ENCODE measurements at regions of chr5 and their contacts with region 1.

Region 1: GRCh38 chr5:43040287-43041098 is at the start of gene ANXA2R:
- DNase-seq: peak; percentile 96
- H3K4me3 Mint-ChIP-seq: peak within 1 kb of the TSS; percentile 97
- H3K27ac Mint-ChIP-seq: peak within 1 kb of the TSS; percentile 99
- H3K4me1 Mint-ChIP-seq: peaks cover 42% of the 10 kb centered on the region
- H3K27me3 Mint-ChIP-seq: no peaks in the 10 kb centered on the region
- total RNA-seq, gene ANXA2R: 25.1 to 28.3 TPM

Region 2: DNA sequence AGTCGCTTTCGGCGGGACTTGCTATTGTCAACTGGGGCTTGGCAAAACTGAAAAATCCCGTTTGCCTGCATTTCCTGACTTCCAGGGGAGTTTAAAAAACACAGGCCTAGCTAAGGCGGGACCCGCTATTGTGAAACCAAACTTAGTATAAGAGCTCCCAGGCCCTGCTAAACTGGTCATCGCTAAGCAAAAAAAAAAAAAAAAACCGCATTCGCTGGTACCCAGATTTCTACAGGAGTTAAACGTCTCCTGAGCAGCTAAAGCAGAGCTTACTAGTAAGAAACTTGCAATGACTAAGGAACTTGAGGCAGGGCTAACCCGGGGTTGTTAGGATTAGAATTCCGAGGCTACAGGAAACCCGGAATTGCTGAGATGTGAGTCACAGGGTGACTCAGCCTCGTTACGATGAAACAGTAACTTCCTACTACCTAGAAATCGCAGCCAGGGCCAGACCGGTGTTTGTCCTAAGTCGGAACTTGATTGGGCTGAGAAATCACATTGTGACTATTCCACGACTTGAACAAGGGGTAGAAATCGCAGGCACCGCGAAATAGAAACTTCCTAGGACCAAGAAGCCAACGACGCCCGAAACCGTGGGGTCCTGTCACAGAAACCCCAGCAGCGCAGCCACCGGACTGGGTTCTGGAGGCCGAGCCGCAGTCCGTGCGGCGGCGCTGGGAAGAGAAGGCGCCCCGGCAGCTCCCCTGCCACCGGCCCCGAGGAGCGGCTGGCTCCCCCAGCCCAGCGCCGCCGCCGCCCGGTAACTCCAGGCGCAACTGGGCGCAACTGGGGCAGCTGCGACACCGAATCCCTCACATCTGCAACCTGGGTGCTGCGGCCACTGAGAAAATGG is 89.8 kb before region 1 on chr5:
- CTCF ChIA-PET with region 1: interaction called, 32 read pairs
- POLR2A ChIA-PET with region 1: interaction called, 310 read pairs
- DNase-seq: peak; percentile 77
- H3K4me3 Mint-ChIP-seq: peak overlapping the region; percentile 85
- H3K27ac Mint-ChIP-seq: peak overlapping the region; percentile 100
- H3K4me1 Mint-ChIP-seq: peaks cover 37% of the 10 kb centered on the region
- H3K27me3 Mint-ChIP-seq: no peaks in the 10 kb centered on the region

Region 3: GRCh38 chr5:42994246-42995151 is 46.0 kb before region 1 on chr5:
- CTCF ChIA-PET with region 1: interaction called, 100 read pairs
- POLR2A ChIA-PET with region 1: interaction called, 614 read pairs
- DNase-seq: peak; percentile 91
- H3K4me3 Mint-ChIP-seq: peak overlapping the region; percentile 99
- H3K27ac Mint-ChIP-seq: peak overlapping the region; percentile 100
- H3K4me1 Mint-ChIP-seq: peaks cover 25% of the 10 kb centered on the region
- H3K27me3 Mint-ChIP-seq: no peaks in the 10 kb centered on the region

Region 4: DNA sequence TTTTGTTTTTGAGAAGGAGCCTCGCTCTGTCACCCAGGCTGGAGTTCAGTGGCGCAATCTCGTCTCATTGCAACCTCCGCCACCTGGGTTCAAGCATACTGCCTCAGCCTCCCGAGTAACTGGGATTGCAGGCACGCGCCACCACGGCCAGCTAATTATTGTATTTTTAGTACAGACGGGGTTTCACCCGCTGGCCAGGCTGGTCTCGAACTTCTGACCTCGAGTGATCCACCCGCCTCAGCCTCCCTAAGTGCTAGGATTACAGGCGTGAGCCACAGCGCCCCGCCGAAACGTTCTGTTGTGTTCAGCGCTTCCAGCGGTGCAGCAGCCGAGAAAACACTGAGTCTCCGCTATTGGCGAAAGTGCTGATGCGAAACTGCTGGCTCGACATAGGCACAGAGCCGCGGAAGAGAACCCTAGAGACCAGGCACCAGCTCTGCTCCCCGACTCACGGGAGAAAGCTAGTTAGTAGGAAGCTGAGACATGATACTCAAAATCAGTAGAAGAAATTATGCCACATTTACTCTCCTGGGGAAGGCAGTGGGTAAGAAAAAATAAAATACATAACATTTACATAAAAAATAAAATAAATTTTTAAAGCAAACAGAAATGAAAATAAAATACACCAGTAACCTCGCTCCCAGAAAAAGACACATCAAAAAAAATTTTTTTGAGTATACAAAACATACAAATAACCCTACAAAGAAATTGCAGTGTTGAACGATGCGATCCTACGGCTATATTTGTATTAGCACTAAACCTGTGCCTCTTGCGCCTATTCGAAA is 31.9 kb before region 1 on chr5:
- CTCF ChIA-PET with region 1: interaction called, 55 read pairs
- POLR2A ChIA-PET with region 1: interaction called, 188 read pairs
- DNase-seq: peak; percentile 93
- H3K4me3 Mint-ChIP-seq: peak overlapping the region; percentile 89
- H3K27ac Mint-ChIP-seq: peak overlapping the region; percentile 97
- H3K4me1 Mint-ChIP-seq: peaks cover 39% of the 10 kb centered on the region
- H3K27me3 Mint-ChIP-seq: peaks cover 5% of the 10 kb centered on the region

Region 5: GRCh38 chr5:43019614-43020293 is 20.7 kb before region 1 on chr5:
- CTCF ChIA-PET with region 1: interaction called, 100 read pairs
- POLR2A ChIA-PET with region 1: interaction called, 753 read pairs
- DNase-seq: peak; percentile 90
- H3K4me3 Mint-ChIP-seq: peak overlapping the region; percentile 93
- H3K27ac Mint-ChIP-seq: peak overlapping the region; percentile 99
- H3K4me1 Mint-ChIP-seq: peaks cover 42% of the 10 kb centered on the region
- H3K27me3 Mint-ChIP-seq: no peaks in the 10 kb centered on the region

Region 6: GRCh38 chr5:43027054-43027785 is 13.3 kb before region 1 on chr5:
- CTCF ChIA-PET with region 1: interaction called, 97 read pairs
- POLR2A ChIA-PET with region 1: interaction called, 753 read pairs
- DNase-seq: no peak
- H3K4me3 Mint-ChIP-seq: no peak overlapping the region
- H3K27ac Mint-ChIP-seq: no peak overlapping the region
- H3K4me1 Mint-ChIP-seq: peaks cover 18% of the 10 kb centered on the region
- H3K27me3 Mint-ChIP-seq: no peaks in the 10 kb centered on the region

Region 7: GRCh38 chr5:43061352-43062075 is 21.0 kb after region 1 on chr5:
- CTCF ChIA-PET with region 1: interaction called, 76 read pairs
- POLR2A ChIA-PET with region 1: interaction called, 312 read pairs
- DNase-seq: no peak
- H3K4me3 Mint-ChIP-seq: no peak overlapping the region
- H3K27ac Mint-ChIP-seq: no peak overlapping the region
- H3K4me1 Mint-ChIP-seq: peaks cover 15% of the 10 kb centered on the region
- H3K27me3 Mint-ChIP-seq: no peaks in the 10 kb centered on the region

Region 8: DNA sequence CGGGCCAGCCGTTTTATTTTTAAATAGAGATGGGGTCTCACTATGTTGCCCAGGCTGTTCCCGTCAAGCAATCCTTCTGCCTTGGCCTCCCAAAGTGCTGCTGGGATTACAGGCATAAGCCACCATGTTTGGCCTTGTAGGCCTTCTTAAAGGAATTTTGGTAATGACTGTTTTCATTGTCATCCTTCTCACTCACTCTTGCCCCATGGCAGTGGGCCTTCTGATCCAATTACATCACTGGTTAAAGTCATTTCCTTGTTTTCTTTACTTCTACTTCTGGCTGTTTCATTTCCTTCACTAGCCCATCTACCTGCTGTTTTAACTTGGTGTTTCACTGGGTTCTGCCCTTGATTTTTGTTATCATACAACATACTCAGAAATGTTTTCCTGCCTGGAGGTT is 131.4 kb after region 1 on chr5:
- CTCF ChIA-PET with region 1: no interaction called
- POLR2A ChIA-PET with region 1: no interaction called
- DNase-seq: no peak
- H3K4me3 Mint-ChIP-seq: no peak overlapping the region
- H3K27ac Mint-ChIP-seq: no peak overlapping the region
- H3K4me1 Mint-ChIP-seq: peaks cover 2% of the 10 kb centered on the region
- H3K27me3 Mint-ChIP-seq: no peaks in the 10 kb centered on the region